AG04449 (cell line): ENCODE measurements at regions of chr9 and their contacts with region 1.

Region 1: GRCh38 chr9:121213136-121213806 is 11.6 kb upstream of the RAB14 start:
- DNase-seq: peak; percentile 45
- H3K4me3 ChIP-seq: no peak overlapping the region
- CTCF ChIP-seq: peak; percentile 93

Region 2: GRCh38 chr9:121233906-121234901 is 20.9 kb after region 1 on chr9:
- CTCF ChIA-PET with region 1: interaction called, 31 read pairs
- POLR2A ChIA-PET with region 1: no interaction called
- DNase-seq: no peak
- H3K4me3 ChIP-seq: no peak overlapping the region
- CTCF ChIP-seq: no peak

Region 3: GRCh38 chr9:121267689-121268597 is 54.7 kb after region 1 on chr9 and contains the start of gene GSN:
- CTCF ChIA-PET with region 1: interaction called, 55 read pairs
- POLR2A ChIA-PET with region 1: interaction called, 5 read pairs
- DNase-seq: no peak
- H3K4me3 ChIP-seq: peak within 1 kb of the TSS; percentile 91
- CTCF ChIP-seq: no peak

Region 4: GRCh38 chr9:121299467-121300234 is 86.4 kb after region 1 on chr9:
- CTCF ChIA-PET with region 1: interaction called, 50 read pairs
- POLR2A ChIA-PET with region 1: no interaction called
- DNase-seq: no peak
- H3K4me3 ChIP-seq: peak overlapping the region; percentile 45
- CTCF ChIP-seq: no peak

Region 5: GRCh38 chr9:121376214-121376830 is 163.1 kb after region 1 on chr9:
- CTCF ChIA-PET with region 1: interaction called, 89 read pairs
- POLR2A ChIA-PET with region 1: no interaction called
- DNase-seq: no peak
- H3K4me3 ChIP-seq: no peak overlapping the region
- CTCF ChIP-seq: no peak

Region 6: GRCh38 chr9:121399883-121400607 is 186.8 kb after region 1 on chr9:
- CTCF ChIA-PET with region 1: interaction called, 195 read pairs
- POLR2A ChIA-PET with region 1: no interaction called
- DNase-seq: peak; percentile 37
- H3K4me3 ChIP-seq: no peak overlapping the region
- CTCF ChIP-seq: peak; percentile 28